ENCODE measurements at regions of chr21 and their contacts with region 1.

Region 1: GRCh38 chr21:40143822-40144525 is 276.7 kb downstream of the PCP4 start:
- DNase-seq: no peak
- H3K4me3 ChIP-seq: no peak overlapping the region
- H3K27ac ChIP-seq: no peak overlapping the region
- H3K4me1 ChIP-seq: peaks cover 0 to 9% (median 4%) of the 10 kb centered on the region in 4 donors
- H3K27me3 ChIP-seq: no peaks in the 10 kb centered on the region
- CTCF ChIP-seq: peak; percentile 31 to 84 (median 64)
- EP300 ChIP-seq: no peak
- POLR2A ChIP-seq: no peak

Region 2: DNA sequence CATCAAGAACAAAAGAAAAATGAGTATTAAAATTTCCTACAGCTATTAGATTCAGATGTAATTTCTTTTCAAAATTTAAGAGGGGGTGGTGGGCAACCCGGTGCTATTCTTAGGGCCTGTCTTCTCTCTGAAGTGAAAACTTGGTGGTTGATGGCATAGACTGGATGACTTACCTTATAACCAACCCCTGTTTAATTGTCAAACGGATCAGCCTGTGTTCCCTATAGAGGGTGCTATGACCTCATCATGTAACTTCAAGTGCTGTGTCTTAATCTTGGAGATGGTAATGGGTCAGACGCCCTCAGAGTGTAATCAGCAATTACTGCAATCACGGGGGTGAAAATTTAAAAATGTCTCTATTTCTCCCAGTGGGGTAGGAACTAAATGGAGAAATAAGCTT is 100.5 kb before region 1 on chr21:
- intact Hi-C with region 1: no loop called
- DNase-seq: no peak
- H3K4me3 ChIP-seq: no peak overlapping the region
- H3K27ac ChIP-seq: no peak overlapping the region
- H3K4me1 ChIP-seq: peaks cover 0 to 21% (median 18%) of the 10 kb centered on the region in 4 donors
- H3K27me3 ChIP-seq: no peaks in the 10 kb centered on the region
- CTCF ChIP-seq: no peak
- EP300 ChIP-seq: no peak
- POLR2A ChIP-seq: no peak

Region 3: GRCh38 chr21:40054403-40054802 is 89.6 kb before region 1 on chr21:
- intact Hi-C with region 1: no loop called
- DNase-seq: peak; percentile 94
- H3K4me3 ChIP-seq: no peak overlapping the region
- H3K27ac ChIP-seq: peak overlapping the region; percentile 84 to 91 (median 87)
- H3K4me1 ChIP-seq: peaks cover 0 to 59% (median 48%) of the 10 kb centered on the region in 4 donors
- H3K27me3 ChIP-seq: no peaks in the 10 kb centered on the region
- CTCF ChIP-seq: no peak
- EP300 ChIP-seq: peak; percentile 60 to 80 (median 72)
- POLR2A ChIP-seq: no peak

Region 4: DNA sequence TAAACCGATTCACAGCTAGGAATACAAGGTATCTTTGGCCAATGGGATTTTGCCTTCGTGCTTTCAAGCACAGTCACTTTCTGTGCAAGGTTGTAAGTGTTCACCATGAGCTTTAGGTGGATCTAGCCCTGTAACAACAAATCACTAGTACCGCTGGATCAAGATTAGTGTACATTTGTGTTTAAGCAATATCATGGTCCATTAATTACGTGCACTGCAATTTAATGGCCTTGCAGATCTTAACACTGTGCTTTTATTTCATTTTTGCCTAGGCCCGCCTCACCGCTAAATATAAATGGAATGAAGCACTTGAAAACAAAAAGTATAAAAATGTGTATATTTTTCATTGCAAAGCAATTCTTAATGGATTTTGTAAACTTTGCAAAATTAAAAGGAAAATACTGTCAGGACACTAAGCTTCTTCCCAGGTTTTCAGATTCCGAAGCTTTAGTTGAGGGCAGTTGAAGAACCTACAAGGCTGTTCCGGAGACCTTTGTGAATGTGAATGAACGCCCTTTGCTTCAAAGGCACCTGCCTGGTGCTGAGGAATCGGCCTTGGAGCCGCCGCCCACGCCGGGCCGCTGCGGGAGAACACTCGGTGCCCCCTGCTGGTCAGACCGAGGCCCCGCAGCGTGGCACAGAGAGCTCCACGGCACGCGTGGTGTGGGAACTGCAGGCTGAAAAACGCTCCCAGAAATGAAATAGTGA is 242.1 kb after region 1 on chr21:
- intact Hi-C with region 1: loop called (anchors 1 kb)
- DNase-seq: no peak
- H3K4me3 ChIP-seq: no peak overlapping the region
- H3K27ac ChIP-seq: no peak overlapping the region
- H3K4me1 ChIP-seq: peaks cover 0 to 5% (median 0%) of the 10 kb centered on the region in 4 donors
- H3K27me3 ChIP-seq: no peaks in the 10 kb centered on the region
- CTCF ChIP-seq: peak; percentile 11 to 84 (median 62)
- EP300 ChIP-seq: no peak
- POLR2A ChIP-seq: no peak

Region 5: GRCh38 chr21:41068967-41069642 is 925.1 kb after region 1 on chr21:
- intact Hi-C with region 1: loop called (anchors 2 kb)
- DNase-seq: peak; percentile 88
- H3K4me3 ChIP-seq: peak overlapping the region in 3 of 4 donors; percentile 2 to 26 (median 25)
- H3K27ac ChIP-seq: no peak overlapping the region
- H3K4me1 ChIP-seq: peaks cover 0 to 7% (median 2%) of the 10 kb centered on the region in 4 donors
- H3K27me3 ChIP-seq: peaks cover 0 to 20% (median 4%) of the 10 kb centered on the region in 3 donors
- CTCF ChIP-seq: peak; percentile 51 to 86 (median 73)
- EP300 ChIP-seq: no peak
- POLR2A ChIP-seq: no peak

Region 6: GRCh38 chr21:41133896-41134522 is 990.0 kb after region 1 on chr21:
- intact Hi-C with region 1: loop called (anchors 10 kb)
- DNase-seq: no peak
- H3K4me3 ChIP-seq: no peak overlapping the region
- H3K27ac ChIP-seq: no peak overlapping the region
- H3K4me1 ChIP-seq: no peaks in the 10 kb centered on the region
- H3K27me3 ChIP-seq: no peaks in the 10 kb centered on the region
- CTCF ChIP-seq: peak in 3 of 4 experiments; percentile 15 to 34 (median 25)
- EP300 ChIP-seq: no peak
- POLR2A ChIP-seq: no peak

Measured in sigmoid colon (tissue), 7 donors.